Endothelial cell of umbilical vein (primary cell): ENCODE measurements at regions of chr3 and their contacts with region 1.

Region 1: DNA sequence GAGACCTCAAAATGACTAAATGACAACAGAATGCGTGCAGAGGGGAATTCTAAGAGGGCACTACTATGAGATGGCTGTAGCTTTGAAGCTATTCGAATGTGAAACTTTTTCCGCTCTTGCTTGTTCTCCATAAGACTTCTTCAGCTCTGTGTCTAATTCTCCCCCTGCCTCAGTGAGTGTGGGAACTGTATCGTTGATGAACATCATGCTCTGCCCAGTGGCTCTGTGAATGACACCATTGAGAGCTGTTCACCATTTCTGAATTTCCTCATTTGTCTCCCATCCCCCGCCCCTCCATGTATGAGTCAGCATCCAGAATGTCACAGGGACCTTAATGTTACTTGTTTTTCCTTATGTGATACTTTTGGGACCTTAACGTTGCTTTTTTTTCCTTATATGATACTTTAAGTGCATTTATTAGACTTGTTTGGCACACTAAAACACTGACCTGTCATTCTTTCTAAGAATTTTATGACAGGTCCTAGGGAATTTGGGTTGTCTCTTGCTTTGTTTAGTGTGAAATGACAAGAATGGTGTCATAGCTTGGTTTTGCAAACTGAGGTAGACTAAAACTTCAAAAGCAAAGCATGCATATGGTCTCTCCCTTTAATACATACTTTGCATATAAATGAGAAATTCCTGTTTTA is 99.5 kb downstream of the FNDC3B start:
- DNase-seq: peak; percentile 78
- H3K4me3 ChIP-seq: no peak overlapping the region
- H3K27ac ChIP-seq: peak overlapping the region; percentile 99
- H3K4me1 ChIP-seq: peaks cover 90% of the 10 kb centered on the region
- H3K27me3 ChIP-seq: no peaks in the 10 kb centered on the region
- CTCF ChIP-seq: no peak
- POLR2A ChIP-seq: peak; percentile 41

Region 2: DNA sequence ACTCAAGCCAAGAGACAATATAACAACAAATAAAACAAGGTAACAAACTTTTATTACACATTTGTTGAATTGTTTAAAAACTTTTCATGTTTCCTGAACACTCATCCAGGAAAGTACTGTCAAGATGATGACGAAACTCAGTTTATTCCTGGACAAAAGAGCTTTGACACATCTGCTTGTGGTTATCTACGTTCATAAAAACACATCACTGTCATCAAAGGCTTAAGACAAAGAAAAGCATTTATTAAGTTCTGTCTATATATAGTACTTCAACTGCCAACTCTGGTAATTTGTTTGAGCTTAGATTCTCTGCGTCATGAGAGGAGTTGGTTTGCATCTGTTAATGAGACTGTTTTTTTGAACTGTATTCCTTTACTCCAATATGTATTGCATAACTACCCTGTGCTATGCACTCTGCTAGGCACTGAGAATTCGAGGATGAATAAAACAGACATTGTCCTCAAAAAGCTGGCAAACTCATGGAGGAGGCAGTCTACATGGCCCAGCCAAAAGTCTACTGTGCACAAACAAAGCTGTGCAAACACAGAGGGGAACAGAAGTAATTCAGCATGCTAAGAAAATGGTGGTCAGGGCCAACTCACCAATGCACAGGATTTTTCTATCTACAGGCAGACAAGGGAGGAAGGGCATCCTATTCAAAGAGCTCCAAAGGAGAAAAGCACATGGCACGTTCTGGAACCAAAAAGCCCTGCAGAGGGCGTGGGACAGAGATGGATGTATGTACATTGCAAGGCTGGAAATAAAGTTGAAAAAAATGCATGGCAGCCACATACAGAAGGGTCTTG is 350.2 kb before region 1 on chr3:
- CTCF ChIA-PET with region 1: interaction called, 3 read pairs
- POLR2A ChIA-PET with region 1: interaction called, 3 read pairs
- dilution Hi-C with region 1: no loop called
- intact Hi-C with region 1: loop called (anchors 1 kb)
- DNase-seq: peak; percentile 92
- H3K4me3 ChIP-seq: no peak overlapping the region
- H3K27ac ChIP-seq: peak overlapping the region; percentile 99
- H3K4me1 ChIP-seq: peaks cover 75% of the 10 kb centered on the region
- H3K27me3 ChIP-seq: no peaks in the 10 kb centered on the region
- CTCF ChIP-seq: no peak
- POLR2A ChIP-seq: no peak

Region 3: GRCh38 chr3:171860830-171861535 is 277.9 kb before region 1 on chr3:
- CTCF ChIA-PET with region 1: no interaction called
- POLR2A ChIA-PET with region 1: no interaction called
- dilution Hi-C with region 1: no loop called
- intact Hi-C with region 1: loop called (anchors 1 kb)
- DNase-seq: peak; percentile 96
- H3K4me3 ChIP-seq: no peak overlapping the region
- H3K27ac ChIP-seq: peak overlapping the region; percentile 95
- H3K4me1 ChIP-seq: peaks cover 57% of the 10 kb centered on the region
- H3K27me3 ChIP-seq: no peaks in the 10 kb centered on the region
- CTCF ChIP-seq: no peak
- POLR2A ChIP-seq: no peak

Region 4: GRCh38 chr3:171950373-171950772 is 188.5 kb before region 1 on chr3:
- CTCF ChIA-PET with region 1: no interaction called
- POLR2A ChIA-PET with region 1: no interaction called
- dilution Hi-C with region 1: no loop called
- intact Hi-C with region 1: loop called (anchors 5 kb)
- DNase-seq: peak; percentile 72
- H3K4me3 ChIP-seq: no peak overlapping the region
- H3K27ac ChIP-seq: no peak overlapping the region
- H3K4me1 ChIP-seq: peaks cover 18% of the 10 kb centered on the region
- H3K27me3 ChIP-seq: no peaks in the 10 kb centered on the region
- CTCF ChIP-seq: no peak
- POLR2A ChIP-seq: no peak

Region 5: GRCh38 chr3:172153335-172153861 is 14.5 kb after region 1 on chr3:
- CTCF ChIA-PET with region 1: interaction called, 7 read pairs
- POLR2A ChIA-PET with region 1: interaction called, 5 read pairs
- dilution Hi-C with region 1: no loop called
- intact Hi-C with region 1: loop called (anchors 1 kb)
- DNase-seq: peak; percentile 98
- H3K4me3 ChIP-seq: no peak overlapping the region
- H3K27ac ChIP-seq: peak overlapping the region; percentile 95
- H3K4me1 ChIP-seq: peaks cover 86% of the 10 kb centered on the region
- H3K27me3 ChIP-seq: no peaks in the 10 kb centered on the region
- CTCF ChIP-seq: no peak
- POLR2A ChIP-seq: peak; percentile 72

Region 6: GRCh38 chr3:172181932-172182586 is 43.1 kb after region 1 on chr3:
- CTCF ChIA-PET with region 1: interaction called, 5 read pairs
- POLR2A ChIA-PET with region 1: interaction called, 3 read pairs
- dilution Hi-C with region 1: no loop called
- intact Hi-C with region 1: loop called (anchors 1 kb)
- DNase-seq: peak; percentile 76
- H3K4me3 ChIP-seq: no peak overlapping the region
- H3K27ac ChIP-seq: peak overlapping the region; percentile 62
- H3K4me1 ChIP-seq: peaks cover 38% of the 10 kb centered on the region
- H3K27me3 ChIP-seq: no peaks in the 10 kb centered on the region
- CTCF ChIP-seq: no peak
- POLR2A ChIP-seq: no peak

Region 7: GRCh38 chr3:172717493-172718088 is 578.7 kb after region 1 on chr3:
- CTCF ChIA-PET with region 1: no interaction called
- POLR2A ChIA-PET with region 1: no interaction called
- dilution Hi-C with region 1: no loop called
- intact Hi-C with region 1: no loop called
- DNase-seq: no peak
- H3K4me3 ChIP-seq: no peak overlapping the region
- H3K27ac ChIP-seq: no peak overlapping the region
- H3K4me1 ChIP-seq: no peaks in the 10 kb centered on the region
- H3K27me3 ChIP-seq: no peaks in the 10 kb centered on the region
- CTCF ChIP-seq: peak; percentile 15 to 34
- POLR2A ChIP-seq: no peak